Activated T-helper 1 cell treated with anti-CD3 and anti-CD28 coated beads, Interleukin-12 subunit alpha, Interleukin-12 subunit beta, Interleukin-2, Interleukin-4 antibody, amounts not matched to agents 30 ng/mL and 10 ng/mL and 1 ng/mL, durations not matched to agents 14 hours and 24 hours and 36 hours (primary cell): ENCODE measurements at regions of chr6 and their contacts with region 1.

Region 1: GRCh38 chr6:45421709-45422502 is 44.2 kb upstream of the SUPT3H start:
- DNase-seq: peak; percentile 37
- H3K4me3 Mint-ChIP-seq: peak overlapping the region; percentile 97
- H3K27ac Mint-ChIP-seq: peak overlapping the region; percentile 94
- H3K4me1 Mint-ChIP-seq: peaks cover 38% of the 10 kb centered on the region
- H3K27me3 Mint-ChIP-seq: peaks cover 26% of the 10 kb centered on the region

Region 2: DNA sequence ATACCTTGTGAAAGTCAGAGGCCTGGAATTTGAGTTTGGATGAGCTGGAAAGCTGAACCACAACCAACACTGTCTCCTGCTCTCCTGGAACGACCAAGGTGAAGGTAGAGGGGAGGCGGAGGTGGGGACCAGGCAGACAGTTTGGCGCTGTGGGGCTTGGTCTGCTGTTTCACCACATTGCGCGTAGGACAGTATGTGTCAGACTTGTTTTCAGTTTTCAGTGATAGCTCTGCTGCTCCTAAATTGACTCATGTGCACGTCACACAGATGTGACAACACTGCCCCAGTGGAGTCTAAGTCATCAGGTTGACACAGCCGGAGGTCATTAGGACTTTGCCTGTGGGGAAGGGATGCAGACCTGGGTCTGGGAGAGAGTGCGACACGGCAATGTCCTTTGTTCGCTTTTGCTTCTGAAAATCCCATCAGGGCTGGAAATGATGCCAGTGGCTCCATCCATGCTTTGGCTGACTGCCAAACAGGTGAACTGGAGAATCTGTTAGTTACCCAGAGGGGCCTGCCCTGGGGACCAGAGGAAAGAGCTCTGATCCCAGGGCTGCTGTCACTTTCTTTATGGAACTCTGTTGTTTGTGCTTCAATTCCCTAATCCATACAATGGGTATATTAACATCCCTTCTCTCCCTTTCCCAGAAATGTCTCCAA is 778.9 kb before region 1 on chr6:
- intact Hi-C with region 1: loop called (anchors 5 kb)
- DNase-seq: no peak
- H3K4me3 Mint-ChIP-seq: no peak overlapping the region
- H3K27ac Mint-ChIP-seq: peak overlapping the region; percentile 84
- H3K4me1 Mint-ChIP-seq: peaks cover 21% of the 10 kb centered on the region
- H3K27me3 Mint-ChIP-seq: peaks cover 2% of the 10 kb centered on the region

Region 3: DNA sequence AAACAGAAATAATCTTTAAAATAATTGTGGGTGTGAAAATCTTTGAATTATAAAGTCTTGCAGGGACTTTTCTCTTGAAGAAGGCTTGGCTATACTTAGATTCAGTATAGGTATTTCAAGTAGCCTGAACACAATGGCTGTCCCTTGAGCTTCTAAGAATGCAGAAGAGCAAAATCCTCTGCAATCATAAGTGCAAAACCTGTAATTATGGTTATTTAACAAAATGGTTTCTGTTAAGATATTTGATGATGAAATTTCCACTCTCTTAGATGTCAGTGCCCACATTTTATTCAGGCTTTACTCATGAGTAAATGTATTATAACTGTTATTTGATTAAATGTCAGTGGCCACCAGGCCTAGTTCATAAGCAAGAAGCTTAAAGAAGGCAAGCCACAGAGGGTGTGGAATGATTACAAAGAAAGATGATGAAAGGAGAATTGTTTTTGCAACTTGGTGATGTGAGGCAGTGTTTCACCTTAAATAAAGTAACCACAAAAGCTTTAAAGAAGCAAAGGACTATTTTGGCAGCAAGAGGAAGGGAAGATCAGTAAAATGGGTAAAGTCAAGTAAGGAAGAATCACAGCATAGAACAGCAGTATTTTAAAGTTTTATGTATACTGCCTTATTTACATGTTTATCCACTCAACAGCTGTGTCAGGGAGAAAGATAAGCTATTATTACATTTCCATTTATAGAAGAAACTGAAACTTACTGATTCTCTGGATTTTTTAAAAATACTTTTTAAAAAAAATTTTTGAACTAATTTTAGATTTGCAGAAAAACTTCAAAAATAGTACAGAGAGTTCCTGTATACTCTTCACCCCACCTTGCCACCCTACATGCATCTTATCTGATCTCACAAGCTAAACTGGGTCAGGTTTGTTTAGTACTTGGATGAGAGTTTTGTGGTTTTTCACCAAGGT is 444.9 kb before region 1 on chr6:
- intact Hi-C with region 1: loop called (anchors 5 kb)
- DNase-seq: no peak
- H3K4me3 Mint-ChIP-seq: peak overlapping the region; percentile 4
- H3K27ac Mint-ChIP-seq: peak overlapping the region; percentile 84
- H3K4me1 Mint-ChIP-seq: peaks cover 43% of the 10 kb centered on the region
- H3K27me3 Mint-ChIP-seq: no peaks in the 10 kb centered on the region

Region 4: GRCh38 chr6:45377554-45378333 is 44.2 kb before region 1 on chr6 and contains the start of gene SUPT3H:
- intact Hi-C with region 1: loop called (anchors 1 kb)
- DNase-seq: peak; percentile 88
- H3K4me3 Mint-ChIP-seq: peak within 1 kb of the TSS; percentile 96
- H3K27ac Mint-ChIP-seq: peak within 1 kb of the TSS; percentile 100
- H3K4me1 Mint-ChIP-seq: peaks cover 27% of the 10 kb centered on the region
- H3K27me3 Mint-ChIP-seq: no peaks in the 10 kb centered on the region
- total RNA-seq, gene SUPT3H: 11.0 and 11.7 TPM in 2 replicates

Region 5: DNA sequence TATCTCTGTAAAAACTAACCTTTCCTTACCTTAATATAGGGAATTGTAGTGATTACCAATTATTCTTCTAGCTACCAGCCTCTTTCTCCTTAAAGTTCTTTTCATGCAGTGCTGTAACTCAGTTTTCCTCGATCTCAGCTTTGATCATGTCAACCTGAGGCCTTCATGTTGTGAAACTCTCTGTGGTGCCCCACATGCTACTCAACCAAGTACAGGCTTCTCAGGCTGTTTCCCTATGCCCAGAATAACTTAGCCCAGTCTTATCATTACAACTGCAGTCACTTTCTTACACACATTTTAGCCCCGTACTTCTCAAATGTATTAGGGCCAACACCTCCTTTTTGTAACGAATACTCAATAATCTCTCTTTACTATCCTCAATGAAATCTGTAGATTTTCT is 45.9 kb after region 1 on chr6:
- intact Hi-C with region 1: no loop called
- DNase-seq: no peak
- H3K4me3 Mint-ChIP-seq: no peak overlapping the region
- H3K27ac Mint-ChIP-seq: no peak overlapping the region
- H3K4me1 Mint-ChIP-seq: peaks cover 19% of the 10 kb centered on the region
- H3K27me3 Mint-ChIP-seq: no peaks in the 10 kb centered on the region

Region 6: GRCh38 chr6:45555981-45556771 is 134.3 kb after region 1 on chr6:
- intact Hi-C with region 1: loop called (anchors 2 kb)
- DNase-seq: no peak
- H3K4me3 Mint-ChIP-seq: no peak overlapping the region
- H3K27ac Mint-ChIP-seq: no peak overlapping the region
- H3K4me1 Mint-ChIP-seq: peaks cover 52% of the 10 kb centered on the region
- H3K27me3 Mint-ChIP-seq: no peaks in the 10 kb centered on the region

Region 7: GRCh38 chr6:45801471-45802289 is 379.8 kb after region 1 on chr6:
- intact Hi-C with region 1: loop called (anchors 1 kb)
- DNase-seq: peak; percentile 33
- H3K4me3 Mint-ChIP-seq: peak overlapping the region; percentile 2
- H3K27ac Mint-ChIP-seq: no peak overlapping the region
- H3K4me1 Mint-ChIP-seq: no peaks in the 10 kb centered on the region
- H3K27me3 Mint-ChIP-seq: no peaks in the 10 kb centered on the region

Region 8: DNA sequence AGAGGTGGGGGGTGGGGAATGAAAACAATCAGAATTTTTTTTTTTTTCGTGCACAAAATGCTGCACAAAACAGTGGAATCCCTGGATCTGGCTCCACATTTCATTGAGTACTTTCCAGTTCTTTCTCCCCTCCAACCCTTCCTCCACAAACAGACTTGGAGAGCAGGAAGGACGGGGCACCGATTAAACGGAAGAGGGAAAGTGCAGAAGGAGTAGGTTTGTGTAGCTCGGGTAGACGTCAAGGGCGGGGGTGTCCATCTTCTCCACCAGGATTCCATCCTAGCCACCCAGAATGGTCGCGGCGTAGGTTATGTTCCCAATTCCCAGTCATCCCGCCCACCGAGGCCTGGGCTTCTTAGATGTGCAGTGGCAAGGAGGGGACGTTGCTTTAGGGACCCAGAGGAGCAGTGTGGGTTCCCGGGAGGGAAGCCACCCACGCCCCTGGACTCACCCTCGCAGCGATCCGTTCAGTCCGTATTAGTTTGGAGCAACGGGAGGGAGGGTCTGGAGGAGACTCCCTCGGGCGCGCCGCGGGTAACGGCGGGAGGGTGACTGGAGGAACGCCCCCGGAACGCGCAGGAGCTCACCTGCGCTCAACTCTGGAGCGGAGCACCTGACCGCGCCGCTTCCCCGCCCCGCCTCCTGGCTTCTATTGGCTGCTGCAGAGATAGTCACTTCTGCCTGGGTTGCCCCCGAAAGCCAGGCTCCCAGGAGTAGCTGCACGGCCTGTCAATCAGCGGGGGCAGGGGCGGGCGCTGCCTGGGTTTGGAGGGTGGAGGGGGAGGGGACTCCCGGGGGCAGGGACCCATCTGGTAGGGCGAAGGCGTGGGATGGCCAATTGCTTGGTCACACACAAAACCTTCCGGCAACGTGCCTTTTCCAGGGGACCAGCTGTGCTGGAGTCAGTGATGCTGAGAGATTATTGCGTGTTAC is 748.7 kb after region 1 on chr6 and contains the start of gene ENPP5:
- intact Hi-C with region 1: loop called (anchors 10 kb)
- DNase-seq: no peak
- H3K4me3 Mint-ChIP-seq: peak within 1 kb of the TSS; percentile 67
- H3K27ac Mint-ChIP-seq: no peak within 1 kb of the TSS
- H3K4me1 Mint-ChIP-seq: peaks cover 27% of the 10 kb centered on the region
- H3K27me3 Mint-ChIP-seq: peaks cover 71% of the 10 kb centered on the region
- total RNA-seq, gene ENPP5: not detected in 2 replicates